IMR-90 (cell line): ENCODE measurements at regions of chr12 and their contacts with region 1.

Region 1: DNA sequence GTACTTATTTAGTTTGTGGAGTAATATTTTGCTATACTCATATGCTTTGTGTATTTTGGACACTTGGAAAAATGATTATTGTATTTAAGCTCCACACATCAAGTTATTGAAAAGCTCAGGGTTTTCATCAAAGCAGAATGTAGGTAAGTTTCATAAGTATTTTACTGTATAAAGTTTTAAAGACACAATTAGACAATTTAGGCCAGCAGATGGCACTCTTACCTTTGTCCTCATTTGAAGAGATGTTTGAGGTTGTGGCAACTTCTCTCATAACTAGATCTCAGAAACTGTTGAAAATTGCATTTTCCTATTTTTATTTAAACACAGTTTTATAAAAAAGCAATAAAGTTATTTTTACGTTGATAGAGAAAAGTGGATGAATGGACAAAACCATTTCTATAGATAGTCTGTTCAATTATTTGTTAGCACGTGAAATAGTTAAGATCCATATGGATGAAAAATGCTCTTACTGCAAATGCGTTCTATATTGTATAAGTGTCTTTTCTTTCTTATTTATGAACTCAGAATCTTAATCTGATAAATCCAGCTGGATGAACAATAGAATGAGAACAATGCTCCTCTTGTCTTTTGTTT is 300.0 kb downstream of the AEBP2 start:
- DNase-seq: peak; percentile 75
- ATAC-seq: peak; percentile 53; the same call in 1 of the 2 replicates
- H3K4me3 ChIP-seq: no peak overlapping the region
- H3K27ac ChIP-seq: no peak overlapping the region
- H3K4me1 ChIP-seq: peaks cover 2% of the 10 kb centered on the region; the same call in 1 of the 2 replicates
- H3K27me3 ChIP-seq: no peaks in the 10 kb centered on the region
- CTCF ChIP-seq: peak; percentile 77
- POLR2A ChIP-seq: no peak
- RAD21 ChIP-seq: peak; percentile 79

Region 2: DNA sequence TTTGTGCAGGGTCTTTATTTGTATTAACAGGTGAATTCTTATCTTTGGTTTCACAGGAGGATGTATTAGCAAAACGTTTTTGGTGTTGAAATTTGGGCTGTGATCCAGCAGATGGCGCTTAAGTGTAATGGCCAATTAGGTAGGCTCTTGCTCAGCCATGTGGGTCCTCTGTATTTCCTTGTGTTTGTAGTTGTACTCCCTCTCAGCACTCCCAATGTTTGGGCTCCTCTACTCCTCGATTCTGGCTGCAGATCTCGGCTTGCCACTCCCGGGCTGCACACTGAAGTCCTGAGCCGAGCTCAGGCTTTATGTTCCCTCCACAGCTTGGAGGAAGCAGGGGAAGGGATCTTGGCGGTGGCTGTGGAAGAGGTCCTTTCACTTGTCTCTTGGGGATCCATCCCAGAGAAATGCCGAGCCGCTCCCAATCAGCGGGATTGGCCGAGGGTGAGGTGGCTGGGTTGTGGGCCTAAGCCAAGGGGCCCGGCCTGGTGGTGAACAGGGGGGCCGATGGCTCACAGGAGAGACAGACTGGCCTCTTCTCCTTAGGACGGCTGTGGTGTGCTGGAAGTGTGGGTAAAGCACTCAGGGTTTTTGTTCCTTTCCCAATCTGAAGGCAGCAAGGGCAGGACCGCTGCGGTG is 166.2 kb before region 1 on chr12:
- CTCF ChIA-PET with region 1: interaction called, 3 read pairs
- POLR2A ChIA-PET with region 1: no interaction called
- dilution Hi-C with region 1: no loop called
- in situ Hi-C with region 1: no loop called
- intact Hi-C with region 1: loop called (anchors 5 kb)
- DNase-seq: peak; percentile 66
- ATAC-seq: peak; percentile 21; the same call in 1 of the 2 replicates
- H3K4me3 ChIP-seq: no peak overlapping the region
- H3K27ac ChIP-seq: peak overlapping the region; percentile 61
- H3K4me1 ChIP-seq: peaks cover 24% of the 10 kb centered on the region
- H3K27me3 ChIP-seq: no peaks in the 10 kb centered on the region
- CTCF ChIP-seq: peak; percentile 58
- POLR2A ChIP-seq: no peak
- RAD21 ChIP-seq: peak; percentile 60

Region 3: GRCh38 chr12:19893514-19893913 is 154.2 kb after region 1 on chr12:
- CTCF ChIA-PET with region 1: interaction called, 3 read pairs
- POLR2A ChIA-PET with region 1: no interaction called
- dilution Hi-C with region 1: no loop called
- in situ Hi-C with region 1: no loop called
- intact Hi-C with region 1: loop called (anchors 2 kb)
- DNase-seq: peak; percentile 54
- ATAC-seq: peak; percentile 90
- H3K4me3 ChIP-seq: no peak overlapping the region
- H3K27ac ChIP-seq: no peak overlapping the region
- H3K4me1 ChIP-seq: peaks cover 5% of the 10 kb centered on the region
- H3K27me3 ChIP-seq: no peaks in the 10 kb centered on the region
- CTCF ChIP-seq: peak; percentile 52
- POLR2A ChIP-seq: no peak
- RAD21 ChIP-seq: peak; percentile 55

Region 4: DNA sequence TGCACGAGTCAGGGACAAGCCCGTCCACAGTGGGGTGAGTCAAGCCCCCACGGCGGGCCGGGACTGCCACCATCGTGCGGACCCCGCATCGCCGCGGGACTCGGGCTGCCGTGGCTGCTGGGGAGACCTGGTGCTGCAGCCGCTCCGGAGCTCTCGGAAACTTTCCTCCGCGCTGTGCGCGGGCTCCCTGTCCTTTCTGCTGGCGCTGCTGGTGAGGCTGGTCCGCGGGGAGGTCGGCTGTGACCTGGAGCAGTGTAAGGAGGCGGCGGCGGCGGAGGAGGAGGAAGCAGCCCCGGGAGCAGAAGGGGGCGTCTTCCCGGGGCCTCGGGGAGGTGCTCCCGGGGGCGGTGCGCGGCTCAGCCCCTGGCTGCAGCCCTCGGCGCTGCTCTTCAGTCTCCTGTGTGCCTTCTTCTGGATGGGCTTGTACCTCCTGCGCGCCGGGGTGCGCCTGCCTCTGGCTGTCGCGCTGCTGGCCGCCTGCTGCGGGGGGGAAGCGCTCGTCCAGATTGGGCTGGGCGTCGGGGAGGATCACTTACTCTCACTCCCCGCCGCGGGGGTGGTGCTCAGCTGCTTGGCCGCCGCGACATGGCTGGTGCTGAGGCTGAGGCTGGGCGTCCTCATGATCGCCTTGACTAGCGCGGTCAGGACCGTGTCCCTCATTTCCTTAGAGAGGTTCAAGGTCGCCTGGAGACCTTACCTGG is 630.2 kb after region 1 on chr12:
- CTCF ChIA-PET with region 1: no interaction called
- POLR2A ChIA-PET with region 1: no interaction called
- dilution Hi-C with region 1: no loop called
- in situ Hi-C with region 1: loop called (anchors 10 kb)
- intact Hi-C with region 1: loop called (anchors 2 kb)
- DNase-seq: peak; percentile 39
- ATAC-seq: peak; percentile 73
- H3K4me3 ChIP-seq: peak overlapping the region; percentile 89
- H3K27ac ChIP-seq: peak overlapping the region; percentile 35
- H3K4me1 ChIP-seq: no peaks in the 10 kb centered on the region
- H3K27me3 ChIP-seq: no peaks in the 10 kb centered on the region
- CTCF ChIP-seq: no peak
- POLR2A ChIP-seq: no peak
- RAD21 ChIP-seq: no peak